A673 (cell line): ENCODE measurements at regions of chr11 and their contacts with region 1.

Region 1: DNA sequence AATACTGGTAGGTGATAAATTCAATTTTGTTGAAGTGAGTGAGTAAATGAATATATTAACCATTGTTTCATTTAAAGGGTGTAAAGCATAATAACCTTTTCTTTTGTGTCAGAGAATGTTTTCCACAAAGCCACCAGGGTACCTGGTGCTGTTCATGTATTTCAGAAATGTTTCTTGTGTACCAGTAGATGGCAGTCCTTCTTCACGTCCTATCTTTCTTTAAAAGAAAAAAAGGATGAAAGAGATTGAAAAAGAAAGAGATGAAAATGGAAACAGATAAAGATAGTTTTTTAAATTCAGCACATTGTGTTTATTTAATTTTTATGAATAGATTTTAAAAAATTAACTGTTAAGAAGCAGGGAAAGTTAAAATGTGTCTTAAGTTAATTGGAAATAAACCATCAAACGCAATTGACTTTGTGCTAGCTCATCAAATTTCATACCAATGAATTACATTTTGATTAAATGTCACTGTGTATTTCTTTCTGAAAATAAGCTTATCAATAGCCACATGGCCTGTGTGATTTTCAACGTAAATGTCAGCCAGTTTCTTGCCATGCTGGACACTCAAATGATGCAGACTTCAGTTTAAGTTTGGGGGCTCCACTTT is 65.5 kb upstream of the CHORDC1 start:
- DNase-seq: peak; percentile 59
- H3K4me3 ChIP-seq: no peak overlapping the region
- H3K27ac ChIP-seq: no peak overlapping the region
- H3K4me1 ChIP-seq: no peaks in the 10 kb centered on the region
- H3K27me3 ChIP-seq: no peaks in the 10 kb centered on the region
- CTCF ChIP-seq: peak; percentile 82

Region 2: DNA sequence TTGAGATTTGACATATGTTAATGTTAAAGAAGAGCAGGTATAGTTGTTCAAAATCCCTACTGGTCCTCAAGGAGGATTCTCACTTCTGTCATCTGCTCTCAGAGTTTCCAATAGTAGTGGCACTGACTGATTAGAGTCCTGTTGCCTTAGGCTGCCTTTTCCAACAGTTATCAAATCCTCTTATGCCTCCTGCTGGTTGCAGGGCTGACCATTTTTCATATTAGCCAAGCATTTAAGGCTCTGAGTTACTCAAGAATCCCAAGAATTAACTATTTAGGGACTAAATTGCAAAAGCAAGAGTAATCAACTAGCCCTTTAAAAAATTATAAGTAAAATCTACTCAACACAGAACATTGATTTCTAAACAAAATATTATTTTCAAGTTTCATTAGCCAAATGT is 146.5 kb after region 1 on chr11:
- CTCF ChIA-PET with region 1: no interaction called
- POLR2A ChIA-PET with region 1: no interaction called
- intact Hi-C with region 1: loop called (anchors 2 kb)
- DNase-seq: peak; percentile 58
- H3K4me3 ChIP-seq: no peak overlapping the region
- H3K27ac ChIP-seq: no peak overlapping the region
- H3K4me1 ChIP-seq: no peaks in the 10 kb centered on the region
- H3K27me3 ChIP-seq: no peaks in the 10 kb centered on the region
- CTCF ChIP-seq: peak; percentile 65

Region 3: DNA sequence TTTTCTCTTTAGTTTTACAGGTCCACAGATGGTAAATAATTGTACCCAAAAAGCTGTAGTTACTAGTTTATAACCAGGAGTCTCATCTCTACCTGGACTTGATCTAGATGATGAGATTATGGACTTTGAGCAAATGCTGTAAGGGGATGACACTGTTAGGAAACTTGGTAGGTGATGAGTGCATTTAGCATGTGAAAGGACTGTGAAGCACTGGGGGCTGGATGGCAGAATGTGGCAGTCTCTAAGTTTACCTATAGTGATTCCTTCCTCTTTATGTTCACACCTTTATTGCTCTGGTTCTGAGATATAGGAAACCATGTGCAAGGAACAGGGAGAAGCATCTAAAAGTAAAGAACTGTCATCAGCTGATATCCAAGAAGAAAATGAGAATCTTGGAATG is 165.2 kb after region 1 on chr11:
- CTCF ChIA-PET with region 1: no interaction called
- POLR2A ChIA-PET with region 1: no interaction called
- intact Hi-C with region 1: loop called (anchors 2 kb)
- DNase-seq: no peak
- H3K4me3 ChIP-seq: no peak overlapping the region
- H3K27ac ChIP-seq: no peak overlapping the region
- H3K4me1 ChIP-seq: no peaks in the 10 kb centered on the region
- H3K27me3 ChIP-seq: no peaks in the 10 kb centered on the region
- CTCF ChIP-seq: no peak